ENCODE measurements at regions of chr11 and their contacts with region 1.

Region 1: GRCh38 chr11:32323814-32324130 is 111.6 kb downstream of the WT1 start:
- DNase-seq: no peak
- ATAC-seq: no peak

Region 2: DNA sequence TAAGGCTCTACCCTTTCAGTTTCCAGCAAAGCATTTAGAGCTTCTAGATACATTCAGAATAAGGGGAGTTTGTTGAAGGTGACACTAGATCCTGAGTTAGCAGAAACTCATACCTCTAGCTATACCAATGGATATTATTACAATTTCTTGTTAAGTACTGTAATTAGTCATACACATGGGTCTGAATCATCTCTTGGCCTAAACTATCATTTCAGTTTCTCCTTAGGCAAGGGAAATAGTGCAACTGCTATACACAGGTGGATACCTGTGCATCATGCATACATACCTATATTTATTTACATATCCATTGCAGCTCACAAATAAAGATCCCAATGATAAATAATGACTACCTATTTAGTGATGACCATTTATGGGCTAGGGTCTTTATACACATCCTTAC is 467.5 kb before region 1 on chr11:
- intact Hi-C with region 1: no loop called
- DNase-seq: no peak
- ATAC-seq: no peak

Region 3: DNA sequence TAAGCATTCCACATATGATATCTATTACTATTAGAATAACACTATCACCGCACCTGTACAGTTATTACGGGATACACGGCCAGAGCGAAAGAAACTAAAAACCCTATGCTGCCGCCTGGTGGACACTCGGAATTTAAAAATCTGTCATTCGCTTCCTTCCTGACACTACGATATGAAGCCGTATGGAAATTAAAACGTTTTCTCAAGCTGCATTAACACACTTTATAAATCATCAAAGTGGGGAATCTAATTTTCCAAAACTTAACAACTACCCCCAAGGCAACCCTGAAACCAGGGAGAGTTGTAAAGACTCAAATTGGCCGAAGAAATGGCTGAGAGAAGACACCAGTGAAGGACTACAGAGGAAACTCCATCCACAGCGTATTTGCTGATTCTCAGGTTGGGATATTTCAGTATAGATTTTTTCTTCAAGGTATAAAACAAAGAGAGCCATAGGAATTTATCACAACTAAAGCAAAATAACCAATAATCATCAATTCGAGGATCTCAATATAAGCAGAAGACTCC is 469.2 kb after region 1 on chr11:
- intact Hi-C with region 1: loop called (anchors 5 kb)
- DNase-seq: peak; percentile 55
- ATAC-seq: peak; percentile 73